ENCODE measurements at regions of chr1 and their contacts with region 1.

Region 1: GRCh38 chr1:67535474-67535873 is 105.3 kb upstream of the SERBP1 start:
- DNase-seq: peak; percentile 82
- H3K4me3 ChIP-seq: no peak overlapping the region
- H3K27ac ChIP-seq: no peak overlapping the region
- H3K4me1 ChIP-seq: no peaks in the 10 kb centered on the region
- H3K27me3 ChIP-seq: no peaks in the 10 kb centered on the region
- CTCF ChIP-seq: peak; percentile 96

Region 2: DNA sequence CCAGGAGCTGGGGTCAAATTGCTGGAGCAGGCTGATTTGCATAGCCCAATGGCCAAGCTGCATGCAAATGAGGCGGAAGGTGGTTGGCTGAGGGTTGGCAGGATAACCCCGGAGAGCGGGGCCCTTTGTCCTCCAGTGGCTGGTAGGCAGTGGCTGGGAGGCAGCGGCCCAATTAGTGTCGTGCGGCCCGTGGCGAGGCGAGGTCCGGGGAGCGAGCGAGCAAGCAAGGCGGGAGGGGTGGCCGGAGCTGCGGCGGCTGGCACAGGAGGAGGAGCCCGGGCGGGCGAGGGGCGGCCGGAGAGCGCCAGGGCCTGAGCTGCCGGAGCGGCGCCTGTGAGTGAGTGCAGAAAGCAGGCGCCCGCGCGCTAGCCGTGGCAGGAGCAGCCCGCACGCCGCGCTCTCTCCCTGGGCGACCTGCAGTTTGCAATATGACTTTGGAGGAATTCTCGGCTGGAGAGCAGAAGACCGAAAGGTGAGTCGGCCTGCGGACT is 149.6 kb after region 1 on chr1 and contains the start of gene GADD45A:
- CTCF ChIA-PET with region 1: no interaction called
- POLR2A ChIA-PET with region 1: interaction called, 9 read pairs
- intact Hi-C with region 1: loop called (anchors 2 kb)
- DNase-seq: peak; percentile 100
- H3K4me3 ChIP-seq: peak within 1 kb of the TSS; percentile 82
- H3K27ac ChIP-seq: peak within 1 kb of the TSS; percentile 98
- H3K4me1 ChIP-seq: peaks cover 29% of the 10 kb centered on the region
- H3K27me3 ChIP-seq: no peaks in the 10 kb centered on the region
- CTCF ChIP-seq: no peak
- total RNA-seq, gene GADD45A: 34.7 and 39.7 TPM in 2 replicates

Region 3: GRCh38 chr1:67838180-67838910 is 302.9 kb after region 1 on chr1:
- CTCF ChIA-PET with region 1: no interaction called
- POLR2A ChIA-PET with region 1: no interaction called
- intact Hi-C with region 1: loop called (anchors 5 kb)
- DNase-seq: no peak
- H3K4me3 ChIP-seq: no peak overlapping the region
- H3K27ac ChIP-seq: no peak overlapping the region
- H3K4me1 ChIP-seq: peaks cover 76% of the 10 kb centered on the region
- H3K27me3 ChIP-seq: no peaks in the 10 kb centered on the region
- CTCF ChIP-seq: no peak

Region 4: GRCh38 chr1:67880056-67880601 is 344.7 kb after region 1 on chr1:
- CTCF ChIA-PET with region 1: no interaction called
- POLR2A ChIA-PET with region 1: no interaction called
- intact Hi-C with region 1: no loop called
- DNase-seq: no peak
- H3K4me3 ChIP-seq: no peak overlapping the region
- H3K27ac ChIP-seq: no peak overlapping the region
- H3K4me1 ChIP-seq: no peaks in the 10 kb centered on the region
- H3K27me3 ChIP-seq: no peaks in the 10 kb centered on the region
- CTCF ChIP-seq: no peak

Region 5: GRCh38 chr1:68111519-68112436 is 576.3 kb after region 1 on chr1:
- CTCF ChIA-PET with region 1: no interaction called
- POLR2A ChIA-PET with region 1: no interaction called
- intact Hi-C with region 1: loop called (anchors 5 kb)
- DNase-seq: peak; percentile 65
- H3K4me3 ChIP-seq: no peak overlapping the region
- H3K27ac ChIP-seq: no peak overlapping the region
- H3K4me1 ChIP-seq: no peaks in the 10 kb centered on the region
- H3K27me3 ChIP-seq: no peaks in the 10 kb centered on the region
- CTCF ChIP-seq: peak; percentile 64

Measured in A673 (cell line).